SK-N-SH (cell line): ENCODE measurements at regions of chr10 and their contacts with region 1.

Region 1: DNA sequence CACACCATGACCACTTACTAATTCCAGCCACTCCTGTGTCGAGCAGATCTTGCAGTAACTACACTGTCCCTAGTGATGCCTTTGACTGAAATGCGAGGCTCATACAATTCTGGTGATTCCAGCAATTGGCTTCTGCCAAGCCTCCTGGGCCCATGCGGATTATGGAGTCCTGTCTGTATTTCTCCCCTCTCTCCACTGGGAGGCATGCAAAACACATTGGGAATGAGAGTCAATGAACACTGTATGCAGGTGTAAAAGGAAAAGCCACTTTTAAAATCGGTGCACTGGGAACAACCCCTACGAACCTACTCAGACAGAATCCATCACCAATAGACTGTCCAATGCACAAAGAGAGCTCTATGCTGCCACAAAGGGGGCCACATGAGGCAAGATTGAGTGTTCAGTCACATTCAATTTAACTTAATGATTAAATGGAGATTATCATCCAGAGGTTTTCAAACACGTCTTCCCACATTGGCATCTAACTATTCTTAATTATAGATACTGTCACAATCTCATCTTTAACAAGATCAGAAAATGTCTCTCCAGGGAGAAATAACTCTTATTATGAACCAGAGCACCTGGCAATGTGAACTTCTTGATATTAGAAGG is 550.6 kb downstream of the GLRX3 start:
- DNase-seq: peak; percentile 72
- H3K4me3 ChIP-seq: no peak overlapping the region
- H3K27ac ChIP-seq: no peak overlapping the region
- H3K4me1 ChIP-seq: peaks cover 0 to 8% of the 10 kb centered on the region in 2 experiments; a peak in 1 of 4 replicates
- H3K27me3 ChIP-seq: no peaks in the 10 kb centered on the region
- CTCF ChIP-seq: no peak
- EP300 ChIP-seq: no peak
- RAD21 ChIP-seq: peak; percentile 90

Region 2: GRCh38 chr10:130708465-130709070 is 21.8 kb after region 1 on chr10:
- CTCF ChIA-PET with region 1: no interaction called
- POLR2A ChIA-PET with region 1: no interaction called
- DNase-seq: no peak
- H3K4me3 ChIP-seq: no peak overlapping the region
- H3K27ac ChIP-seq: no peak overlapping the region
- H3K4me1 ChIP-seq: no peaks in the 10 kb centered on the region
- H3K27me3 ChIP-seq: no peaks in the 10 kb centered on the region
- CTCF ChIP-seq: no peak
- EP300 ChIP-seq: no peak
- RAD21 ChIP-seq: no peak

Region 3: DNA sequence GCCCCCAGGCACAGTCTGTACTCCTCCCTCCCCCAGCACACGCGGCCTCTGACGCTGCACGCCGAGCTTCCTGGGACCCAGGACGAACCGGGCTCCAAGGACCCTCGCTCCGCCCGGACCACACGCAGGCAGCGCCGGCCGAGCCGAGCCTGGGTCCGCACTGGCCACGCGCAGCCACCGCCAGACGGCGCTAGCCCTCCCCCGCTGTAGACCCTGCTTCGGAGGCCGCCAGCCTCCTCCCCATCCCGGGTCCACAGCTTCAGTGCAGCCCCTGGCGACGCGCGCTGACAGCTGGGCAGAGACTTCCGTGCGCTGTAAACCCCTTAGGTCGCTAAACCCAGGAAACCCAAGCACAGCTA is 625.7 kb after region 1 on chr10:
- CTCF ChIA-PET with region 1: interaction called, 11 read pairs
- POLR2A ChIA-PET with region 1: no interaction called
- DNase-seq: peak; percentile 86
- H3K4me3 ChIP-seq: peak overlapping the region in 1 of 2 experiments; percentile 26; a peak in 1 of 4 replicates
- H3K27ac ChIP-seq: no peak overlapping the region
- H3K4me1 ChIP-seq: peaks cover 0 to 22% of the 10 kb centered on the region in 2 experiments; a peak in 2 of 4 replicates
- H3K27me3 ChIP-seq: no peaks in the 10 kb centered on the region
- CTCF ChIP-seq: no peak
- EP300 ChIP-seq: no peak
- RAD21 ChIP-seq: peak; percentile 61